Endothelial cell of umbilical vein (primary cell): ENCODE measurements at regions of chr4 and their contacts with region 1.

Region 1: DNA sequence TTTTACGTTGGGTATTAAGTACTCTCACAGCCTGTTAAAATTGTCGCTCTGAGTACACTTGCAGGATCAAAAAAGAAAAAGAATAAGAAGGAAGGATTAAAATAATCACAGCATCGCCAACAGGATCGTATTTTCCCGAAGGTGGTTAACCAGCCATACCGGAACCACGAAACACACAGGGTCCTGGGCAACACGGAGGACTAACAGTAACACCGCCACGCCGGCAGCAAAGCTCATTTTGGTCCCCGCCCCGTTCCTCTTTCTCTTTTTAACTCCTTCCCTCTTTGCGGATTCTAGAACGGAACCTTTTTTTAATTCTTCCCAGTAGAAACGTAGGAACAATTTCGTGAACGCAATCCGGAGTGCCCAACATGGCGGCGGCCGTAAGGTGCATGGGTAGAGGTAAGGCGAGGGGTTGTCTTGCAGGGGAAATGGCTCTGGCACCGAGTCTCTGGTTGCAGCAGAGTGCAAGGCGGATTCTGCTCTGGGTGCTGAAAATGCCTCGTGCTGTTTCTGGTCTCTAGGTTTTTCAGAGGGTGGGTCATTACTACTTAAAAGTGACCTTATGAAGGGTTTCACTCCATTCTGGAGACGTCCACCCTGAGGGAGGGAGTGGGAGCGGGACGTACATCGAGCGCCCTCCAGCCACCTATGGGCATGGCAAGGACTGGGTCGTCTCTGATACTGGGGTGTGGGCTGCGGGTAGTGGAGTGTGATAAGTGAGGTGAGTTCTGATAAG is at the start of gene MRPL1:
- DNase-seq: peak; percentile 97
- H3K4me3 ChIP-seq: peak within 1 kb of the TSS; percentile 86 to 98 (median 88)
- H3K27ac ChIP-seq: peak within 1 kb of the TSS; percentile 100
- H3K4me1 ChIP-seq: peaks cover 14% of the 10 kb centered on the region
- H3K27me3 ChIP-seq: no peaks in the 10 kb centered on the region
- CTCF ChIP-seq: no peak
- POLR2A ChIP-seq: peak; percentile 91
- total RNA-seq, gene MRPL1: 38.6 and 42.9 TPM in 2 replicates

Region 2: DNA sequence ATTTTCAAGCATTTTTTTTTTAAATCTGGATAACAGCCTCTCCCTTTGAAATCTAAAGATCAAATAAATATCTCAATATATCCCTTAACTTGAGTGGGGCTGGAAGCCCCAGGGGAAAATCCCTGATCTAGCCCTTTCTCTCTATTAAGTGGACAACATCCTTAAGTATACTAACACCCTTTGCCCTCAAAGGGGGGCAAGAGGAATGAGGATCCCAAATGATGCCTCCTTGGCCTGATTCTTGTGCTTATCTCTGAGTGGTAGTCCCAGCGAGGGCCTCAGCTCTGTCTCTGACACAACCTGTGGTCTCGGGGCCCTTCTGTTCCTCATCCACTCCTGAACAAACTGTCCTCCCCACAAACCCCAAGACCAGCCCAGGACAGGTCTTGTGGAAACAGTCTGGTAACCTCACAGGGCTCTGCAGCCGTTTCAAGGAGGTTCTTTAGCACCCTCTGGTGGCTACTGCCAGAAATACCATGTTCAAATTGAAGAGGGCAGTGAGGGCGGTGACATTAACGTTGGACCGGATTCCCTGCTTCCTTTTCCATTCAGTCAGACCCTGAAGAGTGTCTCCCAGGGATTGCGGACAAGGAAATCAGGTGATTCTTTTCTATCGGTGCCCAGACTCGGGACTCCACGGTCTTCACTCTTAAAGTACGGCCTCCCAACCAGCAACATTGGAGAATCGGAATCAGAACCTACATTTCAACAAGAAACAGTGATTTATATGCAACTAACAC is 244.1 kb before region 1 on chr4:
- CTCF ChIA-PET with region 1: interaction called, 3 read pairs
- POLR2A ChIA-PET with region 1: no interaction called
- dilution Hi-C with region 1: no loop called
- intact Hi-C with region 1: loop called (anchors 5 kb)
- DNase-seq: peak; percentile 75
- H3K4me3 ChIP-seq: no peak overlapping the region
- H3K27ac ChIP-seq: no peak overlapping the region
- H3K4me1 ChIP-seq: no peaks in the 10 kb centered on the region
- H3K27me3 ChIP-seq: peaks cover 2 to 8% of the 10 kb centered on the region in 2 experiments
- CTCF ChIP-seq: peak; percentile 84 to 90
- POLR2A ChIP-seq: no peak

Region 3: DNA sequence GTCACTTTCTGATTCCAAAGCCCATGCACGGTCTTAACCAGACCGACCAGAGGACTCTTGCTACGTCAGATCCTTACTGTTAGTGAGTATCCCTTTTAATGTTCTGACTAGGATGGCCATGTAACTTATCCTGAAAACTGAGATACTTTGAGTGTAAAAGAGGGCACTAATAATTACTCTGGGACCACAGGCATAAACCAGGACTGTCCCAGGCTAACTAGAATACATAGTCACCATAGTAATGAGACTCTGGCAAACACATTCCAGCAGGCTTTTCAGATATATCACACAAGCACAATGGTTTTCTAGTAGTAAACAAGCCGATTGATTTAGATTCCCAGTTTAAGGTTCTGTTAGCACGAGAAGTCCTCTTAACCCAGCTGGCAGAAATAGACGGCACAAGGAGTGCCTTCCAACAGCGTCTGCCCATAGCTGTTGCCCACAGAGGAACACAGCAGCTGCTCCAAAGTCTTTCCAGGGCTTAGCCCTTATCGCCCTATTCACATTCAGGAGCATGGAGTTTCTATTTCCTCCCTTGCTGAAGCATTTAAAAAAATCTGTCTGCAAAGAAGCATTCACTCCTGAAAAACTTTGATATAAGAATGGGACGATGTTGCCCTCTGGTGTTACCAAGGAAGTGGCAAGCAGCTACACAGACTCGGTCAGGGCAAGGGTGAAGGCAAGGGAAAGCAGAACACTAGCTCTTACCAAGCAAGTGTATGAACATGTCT is 164.6 kb before region 1 on chr4:
- CTCF ChIA-PET with region 1: interaction called, 5 read pairs
- POLR2A ChIA-PET with region 1: interaction called, 6 read pairs
- dilution Hi-C with region 1: no loop called
- intact Hi-C with region 1: loop called (anchors 2 kb)
- DNase-seq: peak; percentile 89
- H3K4me3 ChIP-seq: no peak overlapping the region
- H3K27ac ChIP-seq: no peak overlapping the region
- H3K4me1 ChIP-seq: peaks cover 27% of the 10 kb centered on the region
- H3K27me3 ChIP-seq: no peaks in the 10 kb centered on the region
- CTCF ChIP-seq: peak; percentile 41 to 50
- POLR2A ChIP-seq: no peak

Region 4: DNA sequence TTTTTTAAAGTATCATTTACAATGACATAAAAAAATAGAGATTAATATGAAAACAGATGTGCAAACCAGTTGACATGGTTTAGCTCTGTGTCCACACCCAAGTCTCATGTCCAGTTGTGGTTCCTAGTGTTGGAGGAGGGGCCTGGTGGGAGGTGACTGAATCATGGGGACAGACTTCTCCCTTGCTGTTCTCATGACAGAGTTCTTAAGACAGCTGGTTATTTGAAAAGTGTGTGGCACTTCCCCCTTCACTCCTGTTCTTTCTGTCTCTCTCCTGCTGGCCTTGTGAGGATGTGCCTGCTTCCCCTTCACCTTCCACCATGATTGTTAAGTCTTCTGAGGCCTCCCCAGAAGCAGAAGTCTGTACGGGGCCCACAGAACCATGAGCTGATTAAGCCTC is 67.3 kb before region 1 on chr4:
- CTCF ChIA-PET with region 1: no interaction called
- POLR2A ChIA-PET with region 1: no interaction called
- dilution Hi-C with region 1: no loop called
- intact Hi-C with region 1: no loop called
- DNase-seq: no peak
- H3K4me3 ChIP-seq: no peak overlapping the region
- H3K27ac ChIP-seq: no peak overlapping the region
- H3K4me1 ChIP-seq: peaks cover 2% of the 10 kb centered on the region
- H3K27me3 ChIP-seq: no peaks in the 10 kb centered on the region
- CTCF ChIP-seq: no peak
- POLR2A ChIP-seq: no peak

Region 5: GRCh38 chr4:77921701-77922100 is 59.1 kb after region 1 on chr4:
- CTCF ChIA-PET with region 1: interaction called, 12 read pairs
- POLR2A ChIA-PET with region 1: interaction called, 3 read pairs
- dilution Hi-C with region 1: no loop called
- intact Hi-C with region 1: loop called (anchors 1 kb)
- DNase-seq: peak; percentile 97
- H3K4me3 ChIP-seq: peak overlapping the region in 1 of 3 experiments; percentile 37
- H3K27ac ChIP-seq: peak overlapping the region; percentile 99
- H3K4me1 ChIP-seq: peaks cover 58% of the 10 kb centered on the region
- H3K27me3 ChIP-seq: no peaks in the 10 kb centered on the region
- CTCF ChIP-seq: no peak
- POLR2A ChIP-seq: peak; percentile 62

Region 6: GRCh38 chr4:78056265-78057129 is 193.8 kb after region 1 on chr4:
- CTCF ChIA-PET with region 1: interaction called, 4 read pairs
- POLR2A ChIA-PET with region 1: no interaction called
- dilution Hi-C with region 1: no loop called
- intact Hi-C with region 1: loop called (anchors 5 kb)
- DNase-seq: peak; percentile 41
- H3K4me3 ChIP-seq: peak overlapping the region; percentile 47 to 80 (median 51)
- H3K27ac ChIP-seq: no peak overlapping the region
- H3K4me1 ChIP-seq: peaks cover 28% of the 10 kb centered on the region
- H3K27me3 ChIP-seq: peaks cover 15 to 19% of the 10 kb centered on the region in 2 experiments
- CTCF ChIP-seq: no peak
- POLR2A ChIP-seq: no peak

Region 7: GRCh38 chr4:78396613-78397291 is 534.1 kb after region 1 on chr4:
- CTCF ChIA-PET with region 1: no interaction called
- POLR2A ChIA-PET with region 1: no interaction called
- dilution Hi-C with region 1: no loop called
- intact Hi-C with region 1: no loop called
- DNase-seq: no peak
- H3K4me3 ChIP-seq: no peak overlapping the region
- H3K27ac ChIP-seq: no peak overlapping the region
- H3K4me1 ChIP-seq: no peaks in the 10 kb centered on the region
- H3K27me3 ChIP-seq: no peaks in the 10 kb centered on the region
- CTCF ChIP-seq: no peak
- POLR2A ChIP-seq: no peak

Region 8: DNA sequence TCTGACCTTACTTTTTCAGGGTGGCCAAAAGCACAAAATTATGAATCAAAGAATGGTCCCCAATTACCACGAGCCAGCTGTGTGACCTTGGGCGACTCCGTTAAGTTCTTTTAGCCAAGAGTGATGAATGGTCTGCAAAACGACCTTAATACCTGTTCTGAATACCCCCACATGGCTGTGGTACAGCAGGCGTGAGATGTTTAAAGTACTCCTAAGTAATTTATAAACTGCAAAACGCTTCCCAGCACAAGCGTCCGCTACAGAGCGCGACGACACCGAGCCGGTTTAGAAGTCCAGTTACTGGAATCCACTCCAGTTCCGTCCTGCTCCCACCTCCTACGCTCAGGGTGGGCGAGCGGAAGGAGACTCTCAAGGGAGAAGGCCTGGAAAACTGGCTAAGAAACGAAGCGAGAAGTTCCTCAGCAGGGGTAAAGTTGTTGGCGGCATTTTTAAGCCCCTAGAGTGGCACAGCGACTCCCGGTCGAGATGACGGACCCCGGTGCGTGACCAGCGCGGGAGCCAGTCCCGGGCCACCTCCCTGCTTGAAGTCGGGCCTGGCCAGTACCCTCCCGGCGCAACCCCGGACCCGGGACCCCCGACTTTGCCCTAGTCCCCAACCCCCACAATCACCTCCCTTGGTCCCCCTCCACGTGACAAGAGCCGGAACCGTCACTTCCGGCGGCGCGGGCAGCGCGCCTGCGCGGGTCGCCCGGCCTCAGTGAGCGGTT is 912.8 kb after region 1 on chr4:
- CTCF ChIA-PET with region 1: no interaction called
- POLR2A ChIA-PET with region 1: no interaction called
- dilution Hi-C with region 1: no loop called
- intact Hi-C with region 1: loop called (anchors 2 kb)
- DNase-seq: peak; percentile 77
- H3K4me3 ChIP-seq: peak overlapping the region; percentile 77 to 91 (median 88)
- H3K27ac ChIP-seq: peak overlapping the region; percentile 97
- H3K4me1 ChIP-seq: peaks cover 24% of the 10 kb centered on the region
- H3K27me3 ChIP-seq: no peaks in the 10 kb centered on the region
- CTCF ChIP-seq: no peak
- POLR2A ChIP-seq: peak; percentile 82